ENCODE measurements at regions of chr7 and their contacts with region 1.

Region 1: GRCh38 chr7:22944022-22944421 is 69.9 kb downstream of the HYCC1 start:
- DNase-seq: no peak
- ATAC-seq: peak; percentile 59

Region 2: GRCh38 chr7:21671859-21672258 is 1272.2 kb before region 1 on chr7:
- intact Hi-C with region 1: loop called (anchors 5 kb)
- DNase-seq: no peak
- ATAC-seq: no peak

Region 3: GRCh38 chr7:21828846-21829245 is 1115.2 kb before region 1 on chr7:
- intact Hi-C with region 1: no loop called
- DNase-seq: no peak
- ATAC-seq: no peak

Region 4: GRCh38 chr7:23055582-23056178 is 111.7 kb after region 1 on chr7:
- intact Hi-C with region 1: no loop called
- DNase-seq: no peak
- ATAC-seq: peak; percentile 85

Region 5: GRCh38 chr7:23105644-23106056 is 161.6 kb after region 1 on chr7 and contains the start of gene KLHL7:
- intact Hi-C with region 1: no loop called
- DNase-seq: peak; percentile 98
- ATAC-seq: peak; percentile 100
- total RNA-seq, gene KLHL7: 29.1 TPM

Region 6: GRCh38 chr7:24336461-24336860 is 1392.4 kb after region 1 on chr7:
- intact Hi-C with region 1: no loop called
- DNase-seq: no peak
- ATAC-seq: no peak

Measured in sciatic nerve (tissue), 2 donors.